ENCODE measurements at regions of chr12 and their contacts with region 1.

Region 1: GRCh38 chr12:24838531-24838950 is 110.4 kb downstream of the BCAT1 start:
- DNase-seq: peak; percentile 36
- H3K4me3 Mint-ChIP-seq: peak overlapping the region; percentile 54
- H3K27ac Mint-ChIP-seq: peak overlapping the region; percentile 90
- H3K4me1 Mint-ChIP-seq: peaks cover 59% of the 10 kb centered on the region
- H3K27me3 Mint-ChIP-seq: no peaks in the 10 kb centered on the region

Region 2: DNA sequence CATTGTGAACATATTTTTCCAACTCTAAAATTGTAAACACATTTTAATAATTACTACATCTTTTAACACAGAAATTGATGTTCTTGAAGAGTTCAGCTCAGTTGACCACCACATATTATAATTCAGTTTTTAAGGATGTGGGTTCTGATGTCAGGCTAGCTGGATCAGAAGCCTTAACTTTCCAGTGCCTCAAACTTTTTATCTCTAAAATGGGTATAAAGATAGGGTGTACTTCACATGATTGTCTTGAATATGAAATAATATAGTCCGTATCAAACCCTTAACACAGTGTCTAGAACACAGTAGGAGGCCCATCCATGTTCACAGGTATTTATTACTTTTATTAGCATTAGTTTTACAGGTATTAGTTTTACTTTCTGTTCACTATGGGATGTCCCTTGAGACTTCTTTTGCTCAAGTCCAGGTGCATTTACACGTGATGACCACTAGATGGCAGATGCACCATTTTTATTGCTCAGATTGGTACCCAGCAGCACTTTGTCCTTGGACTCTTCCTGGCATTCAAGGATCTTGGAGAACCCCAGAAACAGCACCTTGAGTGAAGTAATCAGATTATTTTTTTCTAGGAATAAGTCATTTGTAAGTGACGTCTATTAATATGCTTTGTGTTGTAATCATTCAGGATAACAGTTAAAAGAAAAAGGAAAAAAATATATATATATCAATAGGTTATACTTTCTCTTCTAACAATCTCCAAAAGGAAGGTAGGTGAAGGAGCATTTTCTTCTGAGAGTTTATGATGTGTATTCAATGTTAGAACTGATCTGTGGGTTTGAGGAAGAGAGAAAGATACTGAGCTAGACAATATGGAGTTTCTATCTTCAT is 1633.4 kb before region 1 on chr12:
- intact Hi-C with region 1: loop called (anchors 1 kb)
- DNase-seq: no peak
- H3K4me3 Mint-ChIP-seq: no peak overlapping the region
- H3K27ac Mint-ChIP-seq: no peak overlapping the region
- H3K4me1 Mint-ChIP-seq: no peaks in the 10 kb centered on the region
- H3K27me3 Mint-ChIP-seq: no peaks in the 10 kb centered on the region

Region 3: GRCh38 chr12:24596768-24597388 is 241.7 kb before region 1 on chr12:
- intact Hi-C with region 1: loop called (anchors 1 kb)
- DNase-seq: no peak
- H3K4me3 Mint-ChIP-seq: no peak overlapping the region
- H3K27ac Mint-ChIP-seq: no peak overlapping the region
- H3K4me1 Mint-ChIP-seq: no peaks in the 10 kb centered on the region
- H3K27me3 Mint-ChIP-seq: peaks cover 2% of the 10 kb centered on the region

Region 4: GRCh38 chr12:24738441-24738840 is 100.1 kb before region 1 on chr12:
- intact Hi-C with region 1: no loop called
- DNase-seq: no peak
- H3K4me3 Mint-ChIP-seq: no peak overlapping the region
- H3K27ac Mint-ChIP-seq: no peak overlapping the region
- H3K4me1 Mint-ChIP-seq: peaks cover 20% of the 10 kb centered on the region
- H3K27me3 Mint-ChIP-seq: no peaks in the 10 kb centered on the region

Region 5: DNA sequence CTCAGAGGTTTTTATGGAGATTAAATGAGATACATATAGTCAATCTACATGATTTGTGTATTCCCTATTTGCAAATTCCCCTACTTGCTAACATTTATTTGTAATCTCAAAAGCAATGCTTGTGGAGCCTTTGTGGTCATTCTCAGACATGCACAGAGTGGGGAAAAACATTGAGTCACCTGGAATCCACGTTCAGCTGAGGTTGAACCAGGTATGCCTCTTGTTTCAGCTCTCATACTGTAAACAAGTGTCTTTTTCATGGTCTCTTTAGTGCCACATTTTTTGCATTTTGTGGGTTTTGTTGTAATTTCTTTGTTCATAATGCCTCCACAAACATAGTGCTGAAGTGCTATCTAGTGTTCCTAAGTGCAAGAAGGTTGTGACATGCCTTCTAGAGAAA is 71.5 kb before region 1 on chr12:
- intact Hi-C with region 1: loop called (anchors 1 kb)
- DNase-seq: no peak
- H3K4me3 Mint-ChIP-seq: no peak overlapping the region
- H3K27ac Mint-ChIP-seq: no peak overlapping the region
- H3K4me1 Mint-ChIP-seq: peaks cover 7% of the 10 kb centered on the region
- H3K27me3 Mint-ChIP-seq: no peaks in the 10 kb centered on the region

Region 6: DNA sequence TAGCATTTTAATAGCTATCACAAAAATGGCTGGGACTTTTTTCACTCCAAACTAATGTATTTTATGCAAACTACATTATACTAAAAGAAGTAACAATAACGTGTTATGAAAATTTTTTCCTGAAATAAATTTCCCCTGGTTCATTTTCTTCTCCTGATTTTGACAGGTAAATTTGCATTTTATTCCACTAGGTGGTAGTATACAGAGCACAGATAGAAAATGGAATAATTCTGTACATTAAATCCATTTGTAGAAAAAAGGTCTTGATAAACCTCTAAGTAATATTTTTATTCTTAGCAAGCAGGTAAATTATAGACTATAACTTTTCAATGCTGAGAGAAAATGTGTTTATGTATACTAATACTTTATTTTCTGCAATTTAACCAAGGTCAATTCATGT is 13.9 kb after region 1 on chr12:
- intact Hi-C with region 1: loop called (anchors 1 kb)
- DNase-seq: no peak
- H3K4me3 Mint-ChIP-seq: no peak overlapping the region
- H3K27ac Mint-ChIP-seq: no peak overlapping the region
- H3K4me1 Mint-ChIP-seq: peaks cover 14% of the 10 kb centered on the region
- H3K27me3 Mint-ChIP-seq: peaks cover 2% of the 10 kb centered on the region

Region 7: DNA sequence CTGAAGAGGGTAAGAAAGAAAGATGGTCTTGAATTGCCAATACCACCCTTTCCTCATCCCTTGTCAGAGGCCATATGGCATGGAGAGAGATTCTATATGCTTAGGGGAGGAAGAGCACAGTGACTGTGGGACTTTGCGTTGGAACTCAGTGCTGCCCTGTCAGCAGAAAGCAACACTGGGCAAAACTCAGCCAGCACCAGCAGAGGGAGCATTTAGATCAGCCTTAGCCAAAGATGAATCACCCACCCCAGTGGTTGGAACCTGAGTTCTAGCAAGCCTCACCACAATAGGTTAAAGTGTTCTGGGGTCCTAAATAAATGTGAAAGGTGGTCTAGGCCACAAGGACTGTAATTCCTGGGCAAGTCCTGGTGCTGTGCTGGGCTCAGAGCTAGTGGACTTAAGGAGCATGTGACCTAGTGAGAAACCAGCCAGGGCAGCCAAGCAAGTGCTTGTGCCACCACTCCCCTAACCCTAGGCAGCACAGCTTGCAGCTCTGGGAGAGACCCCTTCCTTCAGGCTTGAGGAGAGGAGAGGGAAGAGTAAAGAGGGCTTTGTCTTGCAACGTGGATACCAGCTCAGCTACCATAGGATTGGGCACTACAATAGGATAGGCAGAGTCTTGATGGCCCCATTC is 121.8 kb after region 1 on chr12:
- intact Hi-C with region 1: loop called (anchors 1 kb)
- DNase-seq: peak; percentile 19
- H3K4me3 Mint-ChIP-seq: no peak overlapping the region
- H3K27ac Mint-ChIP-seq: no peak overlapping the region
- H3K4me1 Mint-ChIP-seq: peaks cover 20% of the 10 kb centered on the region
- H3K27me3 Mint-ChIP-seq: no peaks in the 10 kb centered on the region

Region 8: GRCh38 chr12:25320123-25321006 is 481.8 kb after region 1 on chr12:
- intact Hi-C with region 1: loop called (anchors 2 kb)
- DNase-seq: no peak
- H3K4me3 Mint-ChIP-seq: no peak overlapping the region
- H3K27ac Mint-ChIP-seq: peak overlapping the region; percentile 53
- H3K4me1 Mint-ChIP-seq: peaks cover 50% of the 10 kb centered on the region
- H3K27me3 Mint-ChIP-seq: peaks cover 9% of the 10 kb centered on the region

Measured in activated T-helper 1 cell treated with anti-CD3 and anti-CD28 coated beads, Interleukin-12 subunit alpha, Interleukin-12 subunit beta, Interleukin-2, Interleukin-4 antibody, amounts not matched to agents 30 ng/mL and 10 ng/mL and 1 ng/mL, durations not matched to agents 14 hours and 24 hours and 36 hours (primary cell).